Posterior vena cava (tissue), 2 donors: ENCODE measurements at regions of chr16 and their contacts with region 1.

Region 1: DNA sequence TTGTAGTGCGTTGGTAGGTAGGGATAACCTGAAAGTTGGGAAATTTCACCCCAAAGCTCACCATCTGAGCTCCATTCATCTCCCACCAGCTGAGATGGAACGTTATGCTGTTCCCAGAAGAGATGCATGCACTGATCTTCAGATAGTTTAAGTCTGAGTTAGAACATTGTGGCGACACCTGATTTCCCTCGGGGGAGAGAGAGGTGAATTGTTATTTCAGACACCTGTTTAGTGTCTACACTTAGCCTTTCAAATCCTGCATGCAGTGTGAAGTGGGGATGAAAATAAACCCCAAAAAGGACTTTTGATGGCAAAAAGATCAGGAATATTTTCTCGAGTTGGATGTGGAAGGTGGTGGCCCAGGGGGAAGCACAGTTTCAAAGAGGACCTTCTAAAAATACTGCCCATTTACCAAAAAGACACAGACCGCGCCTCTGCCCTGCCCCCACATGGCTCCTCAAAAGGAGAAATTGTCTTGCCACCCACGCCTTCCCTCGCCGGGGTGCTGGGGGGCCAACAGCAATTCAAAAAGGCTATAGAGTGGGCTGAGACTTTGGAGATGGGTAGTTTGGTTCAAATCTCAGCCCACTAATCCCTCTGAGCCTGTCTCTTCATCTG is 11.4 kb downstream of the CIITA start:
- DNase-seq: no peak

Region 2: GRCh38 chr16:10918294-10919002 is 30.0 kb after region 1 on chr16:
- intact Hi-C with region 1: no loop called
- DNase-seq: peak; percentile 97

Region 3: GRCh38 chr16:10957771-10958486 is 69.5 kb after region 1 on chr16:
- intact Hi-C with region 1: loop called in 1 of 2 experiments (anchors 2 kb)
- DNase-seq: no peak